Motor neuron (in vitro differentiated cells): ENCODE measurements at regions of chr6 and their contacts with region 1.

Region 1: DNA sequence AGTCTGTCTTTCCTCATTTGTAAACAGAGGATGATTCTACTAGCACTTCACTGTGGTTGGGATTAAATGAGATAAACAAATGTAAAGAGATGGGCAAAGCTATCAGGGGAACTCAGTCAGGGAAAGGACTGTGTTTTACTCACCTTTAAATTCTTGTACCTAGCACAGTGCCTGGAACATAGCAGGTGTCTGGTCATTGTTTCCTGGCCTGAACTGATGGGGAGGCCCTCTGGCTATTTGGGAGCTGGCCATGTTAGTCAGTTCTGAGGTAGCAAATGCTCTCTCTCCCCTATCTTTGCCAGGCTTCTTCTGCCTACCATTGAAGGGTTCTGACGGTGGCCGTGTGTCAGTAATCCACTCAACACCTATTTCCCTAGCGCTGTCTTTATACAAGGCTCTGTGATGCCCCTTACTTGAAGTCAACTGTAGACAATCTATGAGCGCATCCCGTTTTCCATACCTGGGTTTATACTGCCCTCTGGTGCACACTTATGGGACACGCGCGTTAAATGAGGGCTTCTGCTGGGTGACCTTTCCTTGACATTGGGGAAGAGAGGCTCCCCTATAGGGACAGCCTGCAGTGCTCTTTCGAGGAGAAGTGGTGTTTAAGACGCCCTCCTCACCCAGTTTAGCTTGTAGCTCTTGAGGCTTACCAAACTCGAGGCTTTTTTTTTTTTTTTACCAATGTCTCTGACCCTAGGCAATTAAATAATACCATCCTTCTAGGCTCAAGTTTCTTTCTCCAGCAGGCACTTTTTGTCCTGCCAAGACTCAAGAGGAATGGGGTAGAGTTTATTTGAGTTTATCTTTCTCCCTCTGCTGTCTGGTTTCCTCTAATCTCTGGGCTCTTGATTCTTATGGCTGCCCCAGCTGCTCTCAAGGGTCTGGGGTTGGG is 4.0 kb upstream of the SPATS1 start:
- ATAC-seq: peak; percentile 82 to 91 (median 84)
- H3K4me3 ChIP-seq: no peak overlapping the region
- H3K27ac ChIP-seq: no peak overlapping the region
- H3K4me1 ChIP-seq: peaks cover 14 to 24% of the 10 kb centered on the region in 2 donors

Region 2: GRCh38 chr6:44172731-44173500 is 165.6 kb before region 1 on chr6:
- in situ Hi-C with region 1: loop called in 1 of 9 experiments (anchors 25 kb)
- ATAC-seq: peak; percentile 85 to 99 (median 98)
- H3K4me3 ChIP-seq: no peak overlapping the region
- H3K27ac ChIP-seq: no peak overlapping the region
- H3K4me1 ChIP-seq: no peaks in the 10 kb centered on the region

Region 3: GRCh38 chr6:44265007-44265721 is 73.3 kb before region 1 on chr6 and contains the start of gene NFKBIE:
- in situ Hi-C with region 1: loop called in 4 of 9 experiments (anchors 10 kb)
- ATAC-seq: peak; percentile 68 to 85 (median 78)
- H3K4me3 ChIP-seq: peak within 1 kb of the TSS; percentile 61 to 83 (median 71)
- H3K27ac ChIP-seq: peak within 1 kb of the TSS; percentile 57 to 75
- H3K4me1 ChIP-seq: peaks cover 44 to 49% of the 10 kb centered on the region in 2 donors
- total RNA-seq, gene NFKBIE: 5.0 to 10.6 (median 8.0) TPM

Region 4: DNA sequence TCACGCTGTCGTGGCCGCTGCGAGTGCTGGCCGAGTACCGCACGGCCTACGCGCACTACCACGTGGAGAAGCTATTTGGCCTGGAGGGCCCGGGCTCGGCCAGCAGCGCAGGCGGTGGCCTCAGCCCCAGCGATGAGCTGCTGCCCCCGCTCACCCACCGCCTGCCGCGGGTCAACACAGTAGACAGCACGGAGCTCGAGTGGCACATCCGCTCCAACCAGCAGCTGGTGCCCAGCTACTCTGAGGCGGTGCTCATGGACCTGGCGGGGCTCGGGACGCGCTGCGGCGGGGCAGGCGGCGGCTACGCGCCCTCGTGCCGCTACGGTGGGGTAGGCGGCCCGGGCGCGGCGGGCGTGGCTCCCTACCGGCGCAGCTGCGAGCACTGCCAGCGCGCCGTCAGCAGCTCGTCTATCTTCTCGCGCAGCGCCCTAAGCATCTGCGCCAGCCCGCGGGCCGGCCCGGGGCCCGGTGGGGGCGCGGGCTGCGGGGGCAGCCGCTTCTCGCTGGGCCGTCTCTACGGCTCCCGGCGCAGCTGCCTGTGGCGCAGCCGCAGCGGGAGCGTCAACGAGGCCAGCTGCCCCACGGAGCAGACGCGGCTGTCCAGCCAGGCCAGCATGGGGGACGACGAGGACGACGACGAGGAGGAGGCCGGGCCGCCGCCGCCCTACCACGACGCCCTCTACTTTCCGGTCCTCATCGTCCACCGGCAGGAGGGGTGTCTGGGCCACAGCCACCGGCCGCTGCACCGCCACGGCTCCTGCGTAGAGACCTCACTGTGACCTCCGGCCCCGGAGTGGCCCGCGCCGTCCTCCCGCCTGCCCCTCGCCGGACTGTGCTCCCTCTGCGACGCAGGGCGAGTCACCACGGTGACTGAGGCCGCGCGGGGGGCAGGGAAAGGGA is 62.5 kb before region 1 on chr6:
- in situ Hi-C with region 1: loop called in 1 of 9 experiments (anchors 10 kb)
- ATAC-seq: peak in 4 of 8 experiments; percentile 29 to 94 (median 88)
- H3K4me3 ChIP-seq: no peak overlapping the region
- H3K27ac ChIP-seq: peak overlapping the region in 1 of 2 donors; percentile 61
- H3K4me1 ChIP-seq: peaks cover 11 to 26% of the 10 kb centered on the region in 2 donors